ENCODE measurements at regions of chr6 and their contacts with region 1.

Region 1: GRCh38 chr6:139364302-139364981 is 10.0 kb downstream of the CITED2 start:
- DNase-seq: no peak
- H3K4me3 ChIP-seq: no peak overlapping the region
- CTCF ChIP-seq: no peak
- POLR2A ChIP-seq: no peak

Region 2: GRCh38 chr6:138580801-138581200 is 783.6 kb before region 1 on chr6:
- intact Hi-C with region 1: loop called (anchors 5 kb)
- DNase-seq: no peak
- H3K4me3 ChIP-seq: no peak overlapping the region
- CTCF ChIP-seq: no peak
- POLR2A ChIP-seq: no peak